ENCODE measurements at regions of chr2 and their contacts with region 1.

Region 1: DNA sequence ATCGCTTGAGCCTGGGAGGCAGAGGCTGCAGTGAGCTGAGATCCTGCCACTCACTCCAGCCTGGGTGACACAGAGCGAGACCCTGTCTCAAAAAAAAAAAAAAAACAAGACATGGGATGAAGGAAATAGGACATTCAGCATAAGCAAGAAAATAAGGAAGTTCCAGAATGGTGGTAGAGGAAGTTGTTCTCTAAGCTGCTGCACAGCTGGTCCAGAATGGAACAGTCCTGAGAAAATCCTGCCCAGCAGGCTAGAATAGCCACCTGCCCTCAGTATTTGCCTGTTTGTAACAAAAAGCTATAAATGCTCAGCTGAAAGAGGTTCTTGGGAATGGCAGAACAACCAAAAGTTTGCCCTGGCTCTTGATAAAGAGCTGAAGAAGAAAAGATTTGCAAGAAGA is 11.1 kb upstream of the MAPRE3 start:
- DNase-seq: no peak
- ATAC-seq: no peak
- H3K4me3 Mint-ChIP-seq: no peak overlapping the region
- H3K27ac Mint-ChIP-seq: no peak overlapping the region
- H3K4me1 Mint-ChIP-seq: no peaks in the 10 kb centered on the region
- H3K27me3 Mint-ChIP-seq: peaks cover 22% of the 10 kb centered on the region

Region 2: DNA sequence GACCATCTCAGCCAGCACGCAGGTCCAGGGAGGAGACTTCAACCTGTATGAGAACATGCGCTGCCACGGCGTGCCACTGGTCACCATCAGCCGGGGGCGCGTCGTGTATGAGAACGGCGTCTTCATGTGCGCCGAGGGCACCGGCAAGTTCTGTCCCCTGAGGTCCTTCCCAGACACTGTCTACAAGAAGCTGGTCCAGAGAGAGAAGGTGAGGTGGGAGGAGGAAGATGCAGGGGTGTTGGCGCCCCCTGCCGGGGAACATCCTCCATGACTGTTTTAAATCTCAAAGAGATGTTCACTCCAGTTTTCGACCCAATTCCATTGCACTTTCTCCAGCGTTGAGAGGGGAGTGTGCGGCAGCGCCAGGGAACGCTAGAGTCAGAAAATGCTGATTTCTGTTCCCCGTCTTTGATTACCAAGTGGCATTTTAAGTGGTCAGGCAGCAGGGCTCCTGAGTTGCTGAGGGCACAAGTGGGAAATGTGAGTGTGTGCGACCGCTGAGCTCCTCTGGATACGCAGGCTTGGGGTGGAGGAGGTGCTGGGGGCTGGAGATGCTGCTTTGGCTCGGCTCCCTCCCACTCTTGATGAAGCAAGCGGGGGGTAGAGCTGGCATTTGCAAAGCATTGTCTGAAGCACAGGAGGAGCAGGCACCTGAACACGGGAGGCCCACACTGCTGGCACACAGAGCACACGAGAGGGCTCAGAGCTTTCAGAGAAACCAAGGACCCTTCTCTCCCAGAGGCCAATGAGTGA is 16.6 kb before region 1 on chr2:
- CTCF ChIA-PET with region 1: interaction called, 10 read pairs
- POLR2A ChIA-PET with region 1: interaction called, 3 read pairs
- DNase-seq: peak; percentile 73
- ATAC-seq: peak; percentile 60
- H3K4me3 Mint-ChIP-seq: no peak overlapping the region
- H3K27ac Mint-ChIP-seq: no peak overlapping the region
- H3K4me1 Mint-ChIP-seq: no peaks in the 10 kb centered on the region
- H3K27me3 Mint-ChIP-seq: peaks cover 3% of the 10 kb centered on the region

Region 3: DNA sequence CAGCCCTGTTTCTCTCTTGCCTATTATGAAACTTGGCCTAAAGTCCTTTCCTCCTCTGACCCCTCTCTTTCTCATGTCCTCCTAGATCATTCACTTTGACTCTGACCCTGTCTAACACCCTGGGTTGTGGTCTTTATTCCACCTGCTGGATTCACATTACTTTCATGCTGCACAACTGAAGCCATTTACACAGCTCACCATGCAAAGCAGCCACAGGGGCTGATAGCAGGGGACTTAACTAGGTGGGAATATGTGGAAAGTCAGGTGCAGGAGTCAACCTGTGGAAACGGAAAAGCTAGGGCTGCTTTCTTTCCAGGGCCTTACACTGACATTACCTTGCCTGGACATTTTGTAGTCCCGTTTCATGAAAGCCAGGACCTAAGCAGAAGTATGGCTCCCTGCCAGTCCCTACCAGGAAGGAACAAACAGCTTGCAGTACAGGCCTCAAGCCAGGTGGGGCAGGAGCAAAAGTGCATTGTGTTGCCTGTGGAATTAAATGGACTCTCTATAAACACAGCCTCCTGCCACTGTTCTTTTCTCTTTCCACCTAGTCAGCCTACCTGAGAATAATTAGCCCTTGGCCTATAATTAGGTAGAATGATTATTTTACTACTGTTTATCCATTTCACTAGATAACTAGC is 22.9 kb after region 1 on chr2:
- CTCF ChIA-PET with region 1: interaction called, 30 read pairs
- POLR2A ChIA-PET with region 1: interaction called, 3 read pairs
- DNase-seq: peak; percentile 34
- ATAC-seq: peak; percentile 84
- H3K4me3 Mint-ChIP-seq: no peak overlapping the region
- H3K27ac Mint-ChIP-seq: no peak overlapping the region
- H3K4me1 Mint-ChIP-seq: no peaks in the 10 kb centered on the region
- H3K27me3 Mint-ChIP-seq: peaks cover 8% of the 10 kb centered on the region

Region 4: DNA sequence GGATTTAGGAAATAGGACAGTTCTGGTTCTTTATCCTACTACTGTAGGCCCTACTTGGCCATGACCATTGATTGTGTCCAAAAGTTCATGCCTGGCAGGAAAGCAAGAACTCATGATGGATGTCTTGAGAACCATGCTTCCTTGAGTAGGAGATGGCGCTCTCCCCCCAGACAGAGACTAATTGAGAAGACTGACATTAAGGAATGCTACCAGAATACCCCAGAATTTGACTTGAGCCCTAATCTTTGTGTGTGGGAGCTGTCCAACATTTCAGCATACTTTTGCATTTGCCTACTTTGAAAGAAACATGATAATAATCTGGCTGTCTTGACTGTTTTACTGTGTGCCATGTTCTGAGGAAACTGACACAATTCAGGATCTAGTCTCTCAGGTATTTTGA is 34.4 kb after region 1 on chr2:
- CTCF ChIA-PET with region 1: interaction called, 14 read pairs
- POLR2A ChIA-PET with region 1: no interaction called
- DNase-seq: no peak
- ATAC-seq: no peak
- H3K4me3 Mint-ChIP-seq: no peak overlapping the region
- H3K27ac Mint-ChIP-seq: no peak overlapping the region
- H3K4me1 Mint-ChIP-seq: no peaks in the 10 kb centered on the region
- H3K27me3 Mint-ChIP-seq: peaks cover 9% of the 10 kb centered on the region

Region 5: GRCh38 chr2:27016801-27017325 is 57.5 kb after region 1 on chr2:
- CTCF ChIA-PET with region 1: interaction called, 150 read pairs
- POLR2A ChIA-PET with region 1: interaction called, 3 read pairs
- DNase-seq: peak; percentile 67
- ATAC-seq: peak; percentile 57
- H3K4me3 Mint-ChIP-seq: no peak overlapping the region
- H3K27ac Mint-ChIP-seq: no peak overlapping the region
- H3K4me1 Mint-ChIP-seq: peaks cover 8% of the 10 kb centered on the region
- H3K27me3 Mint-ChIP-seq: no peaks in the 10 kb centered on the region

Region 6: DNA sequence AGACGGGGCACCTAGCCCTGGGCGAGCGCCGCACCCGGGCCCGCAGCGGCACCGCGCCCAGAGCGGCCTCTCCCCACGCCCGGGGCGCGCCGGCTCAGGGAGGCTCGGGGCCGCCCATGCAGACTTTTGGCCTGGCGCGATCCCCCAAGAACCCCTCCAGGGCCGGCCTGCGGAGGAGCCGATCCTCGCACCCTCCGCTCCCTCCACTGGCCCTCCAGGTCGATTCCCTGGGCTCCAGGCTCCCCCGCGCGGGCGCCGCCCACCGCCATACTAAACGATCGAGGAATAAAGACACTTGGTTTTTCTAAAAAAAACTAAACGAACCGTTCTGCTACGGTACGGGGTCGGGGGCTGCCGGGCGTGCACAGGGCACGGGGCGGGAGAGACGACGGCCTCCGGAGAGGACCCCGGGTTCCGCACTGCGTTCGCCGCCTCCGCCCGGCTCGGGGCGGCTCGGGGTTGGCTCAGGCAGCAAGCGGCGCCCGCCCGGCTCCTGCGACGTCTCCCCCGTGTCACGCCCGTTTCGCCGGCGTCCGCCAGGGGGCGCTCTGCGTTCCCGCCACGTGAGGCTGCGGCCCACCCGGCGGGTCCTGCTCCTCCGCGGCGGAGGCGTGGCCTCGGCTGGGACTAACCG is 126.9 kb after region 1 on chr2:
- CTCF ChIA-PET with region 1: interaction called, 11 read pairs
- POLR2A ChIA-PET with region 1: no interaction called
- DNase-seq: peak; percentile 97
- ATAC-seq: peak; percentile 90
- H3K4me3 Mint-ChIP-seq: peak overlapping the region; percentile 80
- H3K27ac Mint-ChIP-seq: peak overlapping the region; percentile 88
- H3K4me1 Mint-ChIP-seq: peaks cover 59% of the 10 kb centered on the region
- H3K27me3 Mint-ChIP-seq: no peaks in the 10 kb centered on the region

Measured in activated CD8-positive, alpha-beta T cell treated with anti-CD3 and anti-CD28 coated beads, Interleukin-2, amount 10 ng/mL, durations not matched to agents 7 days and 5 days (primary cell).